Right ventricle myocardium superior (tissue), 1 donor: ENCODE measurements at regions of chr2 and their contacts with region 1.

Region 1: GRCh38 chr2:219177552-219178376 is at the start of gene RETREG2:
- DNase-seq: peak; percentile 90
- ATAC-seq: peak; percentile 81
- total RNA-seq, gene RETREG2: 36.8 TPM

Region 2: DNA sequence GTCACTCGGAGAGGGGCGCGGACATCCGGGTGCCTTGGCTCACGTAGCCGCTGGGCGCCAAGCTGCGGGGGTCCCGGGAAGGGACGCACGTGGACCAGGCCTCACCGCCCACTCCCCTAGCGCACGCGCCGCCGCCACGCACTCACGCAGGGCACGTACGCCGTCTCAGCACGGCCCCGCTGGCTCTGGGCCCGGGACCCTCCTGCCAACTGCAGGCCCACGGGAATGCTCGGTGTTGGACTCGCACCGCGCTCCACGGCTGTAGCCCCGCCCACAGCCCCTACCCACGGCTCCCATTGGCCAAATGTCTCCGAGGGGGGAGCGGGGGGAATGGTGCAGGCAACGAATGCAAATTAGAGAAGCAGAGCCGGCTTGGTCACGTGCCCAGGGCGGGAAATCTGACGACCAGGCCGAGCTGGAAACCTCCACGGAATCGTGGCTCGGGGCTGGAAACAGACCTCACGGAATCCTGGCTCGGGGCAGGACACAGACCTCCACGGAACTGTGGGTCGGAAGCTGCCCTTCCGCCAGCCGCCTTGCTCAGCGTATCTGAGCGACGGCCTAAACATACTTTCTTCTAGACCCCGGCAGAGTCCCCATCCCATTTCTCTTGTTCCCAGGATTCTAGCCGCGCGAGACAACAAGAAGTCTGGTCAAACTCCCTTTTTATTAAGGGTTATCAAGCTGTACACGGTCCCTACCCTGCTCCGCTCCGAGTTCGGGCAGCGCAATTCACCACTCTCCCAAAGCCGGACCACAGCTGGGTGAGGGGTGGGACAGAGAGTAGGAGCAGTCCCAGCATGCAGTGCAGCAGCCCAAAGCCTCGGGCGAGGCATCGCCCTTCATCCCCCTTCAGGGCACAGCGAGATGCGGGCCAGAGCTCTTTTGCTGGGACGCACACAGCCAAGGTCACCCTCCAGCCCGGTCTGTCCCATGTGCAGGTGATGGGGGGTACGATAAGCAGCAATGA is 41.3 kb after region 1 on chr2 and contains the start of gene ABCB6:
- intact Hi-C with region 1: loop called (anchors 5 kb)
- DNase-seq: peak; percentile 99
- ATAC-seq: peak; percentile 93
- total RNA-seq, gene ABCB6: 25.2 TPM

Region 3: DNA sequence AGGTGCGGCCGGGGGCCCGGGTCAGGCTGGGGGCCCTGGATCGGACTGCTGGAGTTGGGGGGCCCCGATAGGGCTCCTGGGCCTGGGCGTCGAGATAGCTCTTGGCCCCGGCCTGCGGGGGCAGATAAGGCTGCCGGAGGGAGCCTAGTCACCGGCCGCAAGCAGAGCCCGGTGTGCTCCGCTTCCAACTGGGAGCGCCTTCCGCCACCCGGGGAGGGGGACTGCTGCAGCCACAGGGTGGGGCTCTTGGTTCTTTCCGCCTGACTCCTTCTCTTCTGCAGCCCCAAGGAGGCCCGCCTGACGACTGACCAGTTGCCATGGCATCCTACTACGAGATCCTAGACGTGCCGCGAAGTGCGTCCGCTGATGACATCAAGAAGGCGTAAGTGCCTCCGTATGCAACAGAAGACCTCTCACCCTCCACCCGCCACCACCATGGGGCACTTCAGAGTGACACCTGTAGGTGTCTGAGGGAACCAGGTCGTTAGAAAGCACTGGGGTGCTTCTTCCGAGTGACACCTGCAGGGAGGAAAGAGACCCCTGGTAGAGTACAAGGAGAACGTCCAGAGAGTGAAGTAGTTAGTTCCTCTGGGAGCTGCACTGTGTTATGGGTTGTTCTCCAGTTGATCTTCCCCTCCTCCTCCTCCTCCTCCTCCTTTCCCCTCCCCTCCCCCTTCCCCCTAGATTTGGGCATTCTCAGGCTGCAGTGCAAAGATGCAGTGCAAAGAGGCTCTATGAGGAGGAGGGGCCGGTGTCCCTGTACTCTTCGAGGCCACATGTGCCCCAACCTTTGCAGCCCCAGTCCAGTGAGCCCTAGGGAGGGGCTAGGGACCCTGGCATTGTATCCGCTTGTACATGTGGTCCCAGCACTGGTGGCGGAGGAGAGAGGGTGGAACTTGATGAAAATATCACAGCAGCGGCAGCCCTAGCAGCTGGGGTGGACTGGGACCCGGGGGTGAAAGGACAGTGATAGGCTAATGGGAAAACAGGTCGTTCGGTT is 102.1 kb after region 1 on chr2:
- intact Hi-C with region 1: no loop called
- DNase-seq: peak; percentile 83
- ATAC-seq: no peak

Region 4: GRCh38 chr2:219331560-219332213 is 153.9 kb after region 1 on chr2:
- intact Hi-C with region 1: no loop called
- DNase-seq: no peak
- ATAC-seq: peak; percentile 74